Panc1 (cell line): ENCODE measurements at regions of chr1 and their contacts with region 1.

Region 1: DNA sequence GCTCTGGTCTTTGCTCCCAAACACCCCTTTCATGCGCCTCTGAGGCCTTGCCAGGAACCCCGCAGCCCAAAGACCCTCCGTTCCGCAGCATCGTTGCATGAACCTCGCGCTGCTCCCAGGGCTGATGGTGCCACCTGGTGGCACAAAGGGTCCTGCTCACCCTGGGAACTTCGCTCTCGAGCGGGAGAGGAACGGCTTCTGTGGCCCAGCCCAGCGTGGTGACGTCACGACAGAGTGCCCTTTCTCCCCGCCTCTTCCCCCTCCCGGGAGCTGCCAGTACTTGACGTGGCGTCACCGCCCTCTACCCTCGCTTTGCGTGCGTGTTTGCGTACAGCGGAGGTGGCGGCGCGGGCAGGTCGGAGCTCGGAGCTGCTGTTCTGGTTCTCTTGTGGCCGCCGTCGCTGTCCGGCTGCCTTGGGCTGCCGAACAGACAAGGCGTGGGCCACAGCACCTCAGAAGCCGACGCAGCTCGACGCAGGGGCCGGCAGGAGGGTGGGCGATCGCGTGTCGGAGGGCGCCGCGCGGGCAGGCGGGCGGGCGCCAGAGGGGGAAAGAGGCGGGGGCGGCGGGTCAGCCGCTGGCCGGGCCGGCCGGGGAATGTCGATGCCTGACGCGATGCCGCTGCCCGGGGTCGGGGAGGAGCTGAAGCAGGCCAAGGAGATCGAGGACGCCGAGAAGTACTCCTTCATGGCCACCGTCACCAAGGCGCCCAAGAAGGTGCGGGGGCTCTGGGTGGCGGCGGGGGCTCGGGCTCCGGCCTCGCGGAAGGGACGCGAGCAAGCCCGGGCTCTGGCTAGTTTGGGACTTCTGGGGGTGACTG is at the start of gene AHCYL1:
- DNase-seq: peak; percentile 86
- ATAC-seq: peak; percentile 95
- H3K4me3 ChIP-seq: peak within 1 kb of the TSS; percentile 88 to 90
- H3K27ac ChIP-seq: peak within 1 kb of the TSS; percentile 95
- H3K4me1 ChIP-seq: peaks cover 52% of the 10 kb centered on the region
- H3K27me3 ChIP-seq: no peaks in the 10 kb centered on the region
- CTCF ChIP-seq: peak; percentile 92
- total RNA-seq, gene AHCYL1: 174 TPM

Region 2: GRCh38 chr1:109548321-109549267 is 436.1 kb before region 1 on chr1 and contains the start of gene GNAI3:
- CTCF ChIA-PET with region 1: no interaction called
- POLR2A ChIA-PET with region 1: no interaction called
- in situ Hi-C with region 1: no loop called
- intact Hi-C with region 1: loop called (anchors 10 kb)
- DNase-seq: peak; percentile 77
- ATAC-seq: peak; percentile 95
- H3K4me3 ChIP-seq: peak within 1 kb of the TSS; percentile 65 to 94
- H3K27ac ChIP-seq: peak within 1 kb of the TSS; percentile 98
- H3K4me1 ChIP-seq: peaks cover 9% of the 10 kb centered on the region; the same call in 1 of the 2 replicates
- H3K27me3 ChIP-seq: no peaks in the 10 kb centered on the region
- CTCF ChIP-seq: no peak
- total RNA-seq, gene GNAI3: 6.4 TPM

Region 3: GRCh38 chr1:109643385-109644230 is 341.1 kb before region 1 on chr1:
- CTCF ChIA-PET with region 1: interaction called, 18 read pairs
- POLR2A ChIA-PET with region 1: no interaction called
- in situ Hi-C with region 1: no loop called
- intact Hi-C with region 1: loop called (anchors 5 kb)
- DNase-seq: no peak
- ATAC-seq: peak; percentile 94
- H3K4me3 ChIP-seq: peak overlapping the region in 1 of 2 experiments; percentile 8; a peak in 1 of 4 replicates
- H3K27ac ChIP-seq: peak overlapping the region; percentile 41
- H3K4me1 ChIP-seq: peaks cover 8% of the 10 kb centered on the region; the same call in 1 of the 2 replicates
- H3K27me3 ChIP-seq: no peaks in the 10 kb centered on the region
- CTCF ChIP-seq: peak; percentile 90

Region 4: GRCh38 chr1:109773146-109773899 is 211.3 kb before region 1 on chr1:
- CTCF ChIA-PET with region 1: interaction called, 53 read pairs
- POLR2A ChIA-PET with region 1: interaction called, 4 read pairs
- in situ Hi-C with region 1: no loop called
- intact Hi-C with region 1: loop called (anchors 1 kb)
- DNase-seq: peak; percentile 51
- ATAC-seq: peak; percentile 85
- H3K4me3 ChIP-seq: no peak overlapping the region
- H3K27ac ChIP-seq: no peak overlapping the region
- H3K4me1 ChIP-seq: peaks cover 26% of the 10 kb centered on the region
- H3K27me3 ChIP-seq: no peaks in the 10 kb centered on the region
- CTCF ChIP-seq: peak; percentile 90

Region 5: GRCh38 chr1:109790735-109791494 is 193.8 kb before region 1 on chr1:
- CTCF ChIA-PET with region 1: interaction called, 19 read pairs
- POLR2A ChIA-PET with region 1: interaction called, 3 read pairs
- in situ Hi-C with region 1: no loop called
- intact Hi-C with region 1: no loop called
- DNase-seq: no peak
- ATAC-seq: no peak
- H3K4me3 ChIP-seq: no peak overlapping the region
- H3K27ac ChIP-seq: peak overlapping the region; percentile 93
- H3K4me1 ChIP-seq: peaks cover 83% of the 10 kb centered on the region
- H3K27me3 ChIP-seq: no peaks in the 10 kb centered on the region
- CTCF ChIP-seq: peak; percentile 54

Region 6: DNA sequence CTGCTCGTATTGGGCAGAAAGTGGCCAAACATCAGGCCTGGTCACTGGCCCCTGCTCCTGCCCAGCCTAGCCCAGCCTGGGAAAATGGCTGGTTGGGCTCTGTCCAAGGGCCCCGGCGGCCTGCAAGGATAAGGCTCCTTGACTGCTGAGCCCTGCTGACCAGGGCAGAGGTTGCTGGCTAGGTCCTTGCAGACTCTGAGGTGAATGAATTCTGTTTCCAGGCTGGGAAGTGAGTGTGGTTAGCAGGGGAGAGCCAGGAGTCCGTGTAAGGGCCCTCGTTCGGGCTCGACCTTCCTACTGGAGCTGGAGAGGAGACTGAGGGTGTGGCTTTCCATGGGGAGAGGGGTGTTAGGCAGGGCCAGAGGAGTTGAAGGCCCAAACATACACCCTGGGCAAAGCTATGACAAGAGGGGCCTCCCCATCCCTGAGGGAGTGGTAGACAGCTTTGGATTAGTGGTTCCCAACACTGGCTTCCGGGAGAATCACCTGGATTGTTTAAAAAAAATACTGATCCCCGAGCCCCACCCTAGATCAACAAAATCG is 53.4 kb before region 1 on chr1:
- CTCF ChIA-PET with region 1: interaction called, 11 read pairs
- POLR2A ChIA-PET with region 1: interaction called, 4 read pairs
- in situ Hi-C with region 1: no loop called
- intact Hi-C with region 1: loop called (anchors 5 kb)
- DNase-seq: no peak
- ATAC-seq: peak; percentile 50
- H3K4me3 ChIP-seq: no peak overlapping the region
- H3K27ac ChIP-seq: peak overlapping the region; percentile 97
- H3K4me1 ChIP-seq: peaks cover 78% of the 10 kb centered on the region
- H3K27me3 ChIP-seq: no peaks in the 10 kb centered on the region
- CTCF ChIP-seq: no peak

Region 7: DNA sequence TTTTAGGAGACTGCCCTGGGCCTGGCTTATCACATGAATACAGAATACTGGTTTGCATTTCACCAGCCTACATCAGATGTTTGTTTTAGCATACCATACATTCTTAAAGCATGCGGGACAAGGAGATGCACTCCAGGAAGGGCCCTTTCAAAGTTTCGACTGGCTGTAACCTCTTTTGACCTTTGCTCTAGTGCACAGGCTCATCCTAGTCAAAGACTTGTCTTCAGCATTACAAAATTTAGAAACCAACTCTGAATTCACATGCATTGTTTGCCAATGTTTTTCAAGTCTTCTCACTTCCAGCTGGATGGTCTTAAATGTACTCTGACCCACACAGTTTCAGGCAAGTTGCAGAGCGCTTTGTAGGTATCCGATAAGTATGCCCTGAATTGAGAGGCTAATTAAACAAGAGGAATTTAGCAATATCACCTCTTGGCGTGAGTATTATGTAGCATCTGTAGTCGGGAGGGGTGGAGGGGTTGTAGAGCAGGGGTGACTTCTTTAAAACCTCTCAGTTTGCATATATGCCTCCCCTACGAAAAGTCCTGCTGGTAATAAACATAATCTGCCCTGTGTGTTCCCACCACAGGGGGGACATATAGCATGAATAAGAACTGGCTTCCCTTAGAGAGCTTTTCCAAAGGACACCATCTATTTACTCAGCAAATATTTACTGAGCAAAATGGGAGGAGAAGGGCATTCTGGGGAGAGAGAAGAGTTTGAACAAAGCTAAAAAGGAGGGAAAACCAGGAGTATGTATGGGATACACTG is 24.5 kb before region 1 on chr1:
- CTCF ChIA-PET with region 1: interaction called, 16 read pairs
- POLR2A ChIA-PET with region 1: interaction called, 11 read pairs
- in situ Hi-C with region 1: no loop called
- intact Hi-C with region 1: no loop called
- DNase-seq: peak; percentile 89
- ATAC-seq: peak; percentile 95
- H3K4me3 ChIP-seq: peak overlapping the region in 1 of 2 experiments; percentile 19; a peak in 1 of 4 replicates
- H3K27ac ChIP-seq: peak overlapping the region; percentile 100
- H3K4me1 ChIP-seq: peaks cover 47% of the 10 kb centered on the region
- H3K27me3 ChIP-seq: no peaks in the 10 kb centered on the region
- CTCF ChIP-seq: peak; percentile 32

Region 8: GRCh38 chr1:110074166-110074565 is 89.5 kb after region 1 on chr1:
- CTCF ChIA-PET with region 1: no interaction called
- POLR2A ChIA-PET with region 1: no interaction called
- in situ Hi-C with region 1: no loop called
- intact Hi-C with region 1: no loop called
- DNase-seq: no peak
- ATAC-seq: no peak
- H3K4me3 ChIP-seq: no peak overlapping the region
- H3K27ac ChIP-seq: no peak overlapping the region
- H3K4me1 ChIP-seq: no peaks in the 10 kb centered on the region
- H3K27me3 ChIP-seq: no peaks in the 10 kb centered on the region
- CTCF ChIP-seq: no peak